Endothelial cell of umbilical vein (primary cell): ENCODE measurements at regions of chr1 and their contacts with region 1.

Region 1: GRCh38 chr1:112955781-112956543 is at the start of gene SLC16A1:
- DNase-seq: peak; percentile 96
- H3K4me3 ChIP-seq: peak within 1 kb of the TSS; percentile 91 to 99 (median 97)
- H3K27ac ChIP-seq: peak within 1 kb of the TSS; percentile 89
- H3K4me1 ChIP-seq: peaks cover 42% of the 10 kb centered on the region
- H3K27me3 ChIP-seq: no peaks in the 10 kb centered on the region
- CTCF ChIP-seq: peak in 1 of 2 donors; percentile 35
- POLR2A ChIP-seq: peak; percentile 99
- total RNA-seq, gene SLC16A1: 117 and 148 TPM in 2 replicates

Region 2: DNA sequence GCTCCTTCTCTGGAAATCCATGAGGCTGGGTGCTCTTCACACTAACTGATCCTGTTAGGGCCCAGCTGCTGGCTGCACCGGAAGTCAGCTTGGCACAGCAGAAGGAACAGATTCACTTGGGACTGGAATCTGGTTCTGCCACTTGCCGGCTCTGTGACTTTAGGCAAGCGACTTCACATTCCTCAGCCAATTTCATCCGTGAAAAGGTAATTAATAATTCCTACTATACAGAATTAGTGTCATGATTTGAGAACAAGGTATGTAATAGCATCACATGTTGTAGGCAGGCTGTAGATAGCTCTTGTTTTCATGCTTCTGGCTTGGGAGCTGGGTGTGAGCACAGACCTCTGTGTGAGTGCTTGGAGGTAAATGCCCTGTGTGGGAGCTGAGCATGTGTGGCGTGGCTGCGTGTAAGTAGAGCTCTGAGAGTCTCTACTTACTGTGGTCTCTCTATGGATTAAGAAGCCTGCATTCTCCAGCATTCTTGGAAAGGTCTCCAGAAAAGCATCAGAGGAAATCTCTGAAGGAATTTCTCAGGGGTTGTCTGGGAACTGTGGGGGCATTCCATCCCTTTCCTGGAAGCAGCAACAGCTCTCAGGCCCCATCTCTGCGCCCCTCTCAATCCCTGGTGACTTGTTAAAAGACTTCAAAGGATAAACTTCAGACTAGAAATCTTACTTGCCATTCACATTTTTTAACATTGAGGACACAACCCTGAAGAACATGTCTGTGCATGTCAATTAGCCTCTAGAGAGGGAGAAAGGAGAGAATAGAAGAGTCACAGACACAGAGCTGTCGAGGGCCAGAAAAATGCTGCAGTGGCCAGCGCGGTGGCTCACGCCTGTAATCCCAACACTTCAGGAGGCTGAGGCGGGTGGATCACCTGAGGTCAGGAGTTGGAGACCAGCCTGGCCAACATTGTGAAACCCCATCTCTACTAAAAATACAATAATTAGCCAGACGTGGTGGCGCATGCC is 193.1 kb before region 1 on chr1:
- CTCF ChIA-PET with region 1: no interaction called
- POLR2A ChIA-PET with region 1: no interaction called
- dilution Hi-C with region 1: no loop called
- intact Hi-C with region 1: no loop called
- DNase-seq: no peak
- H3K4me3 ChIP-seq: no peak overlapping the region
- H3K27ac ChIP-seq: no peak overlapping the region
- H3K4me1 ChIP-seq: no peaks in the 10 kb centered on the region
- H3K27me3 ChIP-seq: peaks cover 4% of the 10 kb centered on the region in 2 experiments
- CTCF ChIP-seq: no peak
- POLR2A ChIP-seq: no peak

Region 3: GRCh38 chr1:112809253-112809684 is 146.7 kb before region 1 on chr1:
- CTCF ChIA-PET with region 1: interaction called, 3 read pairs
- POLR2A ChIA-PET with region 1: no interaction called
- dilution Hi-C with region 1: no loop called
- intact Hi-C with region 1: loop called (anchors 1 kb)
- DNase-seq: peak; percentile 80
- H3K4me3 ChIP-seq: no peak overlapping the region
- H3K27ac ChIP-seq: no peak overlapping the region
- H3K4me1 ChIP-seq: peaks cover 3% of the 10 kb centered on the region
- H3K27me3 ChIP-seq: no peaks in the 10 kb centered on the region
- CTCF ChIP-seq: peak; percentile 94 to 96
- POLR2A ChIP-seq: no peak

Region 4: GRCh38 chr1:112866151-112866550 is 89.8 kb before region 1 on chr1:
- CTCF ChIA-PET with region 1: no interaction called
- POLR2A ChIA-PET with region 1: interaction called, 3 read pairs
- dilution Hi-C with region 1: no loop called
- intact Hi-C with region 1: loop called (anchors 5 kb)
- DNase-seq: peak; percentile 94
- H3K4me3 ChIP-seq: no peak overlapping the region
- H3K27ac ChIP-seq: peak overlapping the region; percentile 97
- H3K4me1 ChIP-seq: peaks cover 43% of the 10 kb centered on the region
- H3K27me3 ChIP-seq: no peaks in the 10 kb centered on the region
- CTCF ChIP-seq: no peak
- POLR2A ChIP-seq: peak; percentile 76

Region 5: GRCh38 chr1:112882271-112882744 is 73.7 kb before region 1 on chr1:
- CTCF ChIA-PET with region 1: interaction called, 10 read pairs
- POLR2A ChIA-PET with region 1: no interaction called
- dilution Hi-C with region 1: no loop called
- intact Hi-C with region 1: loop called (anchors 1 kb)
- DNase-seq: no peak
- H3K4me3 ChIP-seq: no peak overlapping the region
- H3K27ac ChIP-seq: no peak overlapping the region
- H3K4me1 ChIP-seq: no peaks in the 10 kb centered on the region
- H3K27me3 ChIP-seq: no peaks in the 10 kb centered on the region
- CTCF ChIP-seq: no peak
- POLR2A ChIP-seq: no peak

Region 6: DNA sequence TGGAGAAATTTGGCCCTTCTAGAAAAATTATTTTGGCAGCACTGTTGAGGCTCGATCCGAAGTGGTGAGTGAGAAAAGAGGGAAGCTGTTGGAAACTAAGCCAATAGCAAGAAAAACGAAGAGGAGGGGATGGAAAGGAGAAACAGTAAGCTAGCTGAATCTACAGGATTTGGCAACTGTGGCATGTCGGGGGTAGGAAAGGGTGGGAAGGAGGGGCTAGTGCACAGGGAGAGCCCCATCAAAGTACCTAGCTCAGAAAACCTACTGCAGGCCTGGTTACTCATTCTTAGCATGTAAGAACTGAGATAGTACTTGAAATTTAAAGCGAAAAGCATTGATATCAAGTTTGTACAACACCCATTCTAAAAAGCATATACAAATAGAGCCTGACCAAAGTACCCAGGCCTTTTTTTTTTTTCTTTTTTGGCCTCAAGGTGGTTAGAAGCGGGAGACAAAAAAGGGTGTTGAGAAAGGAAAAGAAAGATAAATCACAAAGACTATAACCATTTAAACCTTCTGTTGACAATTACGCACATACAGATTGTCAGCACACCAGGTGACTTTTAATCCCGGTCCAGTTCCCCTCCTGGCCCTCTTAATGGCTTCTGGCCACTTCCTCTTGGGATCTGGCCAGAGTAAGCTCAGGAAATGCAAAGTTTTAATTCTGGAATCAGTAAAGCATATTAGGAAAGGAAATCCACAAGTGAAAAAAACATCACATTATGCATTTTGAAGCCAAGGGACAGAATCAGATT is 50.4 kb before region 1 on chr1:
- CTCF ChIA-PET with region 1: interaction called, 3 read pairs
- POLR2A ChIA-PET with region 1: interaction called, 8 read pairs
- dilution Hi-C with region 1: no loop called
- intact Hi-C with region 1: loop called (anchors 2 kb)
- DNase-seq: peak; percentile 76
- H3K4me3 ChIP-seq: no peak overlapping the region
- H3K27ac ChIP-seq: no peak overlapping the region
- H3K4me1 ChIP-seq: peaks cover 26% of the 10 kb centered on the region
- H3K27me3 ChIP-seq: no peaks in the 10 kb centered on the region
- CTCF ChIP-seq: no peak
- POLR2A ChIP-seq: no peak

Region 7: DNA sequence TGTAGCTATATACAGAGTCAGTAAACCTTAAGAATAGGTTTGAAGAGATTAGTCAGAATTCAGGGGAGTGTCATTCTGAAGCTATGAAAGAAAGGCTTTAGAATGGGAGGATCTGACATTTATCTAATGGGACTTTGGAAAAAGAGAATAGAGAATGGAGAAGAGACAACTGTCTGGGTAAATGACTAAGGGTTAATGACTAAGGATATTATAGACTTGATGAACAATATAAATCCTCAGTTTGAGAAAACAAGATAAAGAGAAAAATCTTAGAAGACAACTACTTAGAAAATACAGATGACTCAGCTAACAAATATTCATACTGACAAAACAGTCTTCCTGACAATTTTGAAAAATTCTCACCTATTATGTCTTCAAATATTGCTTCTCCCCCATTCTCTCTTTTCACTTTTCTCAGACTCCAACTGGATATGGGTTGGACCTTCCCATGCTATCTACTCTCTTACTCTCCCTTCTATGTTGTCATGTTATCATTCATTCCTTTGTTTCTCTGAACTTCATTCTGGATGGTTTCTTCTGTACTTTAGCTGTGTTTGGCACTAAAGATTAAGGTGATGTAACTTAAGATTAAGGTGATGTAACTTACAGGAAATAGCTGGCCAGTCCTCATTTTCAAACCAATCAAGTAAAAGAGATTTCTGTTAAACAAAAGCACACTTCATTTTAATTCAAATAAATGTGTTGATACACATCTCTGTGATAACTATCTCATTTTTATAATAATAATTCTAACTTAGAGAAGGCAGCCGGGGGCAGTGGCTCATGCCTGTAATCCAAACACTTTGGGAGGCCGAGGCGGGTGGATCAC is 20.3 kb before region 1 on chr1:
- CTCF ChIA-PET with region 1: interaction called, 8 read pairs
- POLR2A ChIA-PET with region 1: interaction called, 11 read pairs
- dilution Hi-C with region 1: no loop called
- intact Hi-C with region 1: no loop called
- DNase-seq: peak; percentile 57
- H3K4me3 ChIP-seq: no peak overlapping the region
- H3K27ac ChIP-seq: peak overlapping the region; percentile 74
- H3K4me1 ChIP-seq: peaks cover 32% of the 10 kb centered on the region
- H3K27me3 ChIP-seq: no peaks in the 10 kb centered on the region
- CTCF ChIP-seq: no peak
- POLR2A ChIP-seq: no peak

Region 8: GRCh38 chr1:113007706-113008364 is 51.9 kb after region 1 on chr1:
- CTCF ChIA-PET with region 1: no interaction called
- POLR2A ChIA-PET with region 1: no interaction called
- dilution Hi-C with region 1: no loop called
- intact Hi-C with region 1: no loop called
- DNase-seq: no peak
- H3K4me3 ChIP-seq: no peak overlapping the region
- H3K27ac ChIP-seq: no peak overlapping the region
- H3K4me1 ChIP-seq: no peaks in the 10 kb centered on the region
- H3K27me3 ChIP-seq: no peaks in the 10 kb centered on the region
- CTCF ChIP-seq: no peak
- POLR2A ChIP-seq: no peak

Region 9: DNA sequence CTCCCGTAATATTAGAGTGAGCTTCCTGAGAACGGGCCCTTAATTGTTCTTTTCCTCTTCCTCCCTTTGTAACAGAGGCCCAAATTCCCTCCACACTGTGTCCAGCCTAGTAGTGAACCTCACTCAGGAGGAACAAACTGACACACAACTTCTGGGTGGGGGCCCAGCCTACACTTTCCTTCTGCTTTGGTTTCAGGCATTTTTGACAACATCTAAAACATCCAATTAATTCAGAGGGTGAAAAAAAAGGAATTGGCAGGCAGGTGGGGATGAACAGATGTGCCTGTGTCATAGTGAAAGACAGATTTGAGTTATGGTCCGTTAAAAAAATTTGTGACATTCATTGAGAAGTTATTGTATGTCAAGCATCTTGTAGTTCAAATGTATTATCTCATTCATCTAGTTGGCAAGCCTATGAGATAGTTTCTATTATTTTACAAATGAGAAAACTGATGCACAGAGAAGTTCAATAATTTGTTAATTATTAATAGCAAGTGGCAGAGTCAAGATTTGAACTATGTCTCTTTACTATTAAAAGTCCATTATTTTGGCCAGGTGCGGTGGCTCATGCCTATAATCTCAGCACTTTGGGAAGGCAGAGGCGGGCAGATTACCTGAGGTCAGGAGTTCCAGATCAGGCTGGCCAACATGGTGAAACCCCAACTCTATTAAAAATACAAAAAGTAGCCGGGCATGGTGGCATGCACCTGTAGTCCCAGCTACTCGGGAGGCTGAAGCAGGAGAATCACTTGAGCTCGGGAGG is 75.4 kb after region 1 on chr1:
- CTCF ChIA-PET with region 1: no interaction called
- POLR2A ChIA-PET with region 1: no interaction called
- dilution Hi-C with region 1: no loop called
- intact Hi-C with region 1: no loop called
- DNase-seq: peak; percentile 78
- H3K4me3 ChIP-seq: no peak overlapping the region
- H3K27ac ChIP-seq: peak overlapping the region; percentile 6
- H3K4me1 ChIP-seq: peaks cover 10% of the 10 kb centered on the region
- H3K27me3 ChIP-seq: no peaks in the 10 kb centered on the region
- CTCF ChIP-seq: no peak
- POLR2A ChIP-seq: no peak

Region 10: DNA sequence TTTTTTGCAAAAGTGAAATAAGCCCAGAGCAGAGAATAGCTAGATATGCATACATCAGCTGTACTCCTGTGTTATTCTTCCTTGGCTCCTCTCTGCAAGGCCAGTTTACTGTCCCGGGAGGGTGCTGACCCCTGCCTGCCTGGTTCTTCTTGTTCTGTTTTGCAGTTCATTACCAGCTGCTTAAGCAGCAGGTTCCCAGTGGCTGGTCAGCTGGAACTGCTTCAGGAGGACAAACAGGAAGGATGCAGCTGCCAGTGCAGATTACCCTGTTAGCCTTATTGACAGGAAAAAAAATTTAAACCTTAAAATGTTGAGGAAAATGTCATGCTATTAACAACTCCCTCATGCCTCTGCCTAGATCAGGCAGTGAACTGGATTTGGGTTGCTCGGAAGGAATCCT is 101.0 kb after region 1 on chr1:
- CTCF ChIA-PET with region 1: interaction called, 5 read pairs
- POLR2A ChIA-PET with region 1: interaction called, 3 read pairs
- dilution Hi-C with region 1: no loop called
- intact Hi-C with region 1: loop called (anchors 5 kb)
- DNase-seq: peak; percentile 64
- H3K4me3 ChIP-seq: no peak overlapping the region
- H3K27ac ChIP-seq: no peak overlapping the region
- H3K4me1 ChIP-seq: peaks cover 20% of the 10 kb centered on the region
- H3K27me3 ChIP-seq: no peaks in the 10 kb centered on the region
- CTCF ChIP-seq: no peak
- POLR2A ChIP-seq: no peak